Endothelial cell of umbilical vein (primary cell): ENCODE measurements at regions of chr2 and their contacts with region 1.

Region 1: GRCh38 chr2:86584151-86584913 is 21.1 kb upstream of the CHMP3 start:
- DNase-seq: peak; percentile 94
- H3K4me3 ChIP-seq: no peak overlapping the region
- H3K27ac ChIP-seq: peak overlapping the region; percentile 94
- H3K4me1 ChIP-seq: peaks cover 20% of the 10 kb centered on the region
- H3K27me3 ChIP-seq: no peaks in the 10 kb centered on the region
- CTCF ChIP-seq: no peak
- POLR2A ChIP-seq: peak; percentile 22

Region 2: GRCh38 chr2:86512034-86512433 is 72.3 kb before region 1 on chr2:
- CTCF ChIA-PET with region 1: no interaction called
- POLR2A ChIA-PET with region 1: no interaction called
- dilution Hi-C with region 1: no loop called
- intact Hi-C with region 1: no loop called
- DNase-seq: no peak
- H3K4me3 ChIP-seq: no peak overlapping the region
- H3K27ac ChIP-seq: no peak overlapping the region
- H3K4me1 ChIP-seq: no peaks in the 10 kb centered on the region
- H3K27me3 ChIP-seq: no peaks in the 10 kb centered on the region
- CTCF ChIP-seq: no peak
- POLR2A ChIP-seq: no peak

Region 3: DNA sequence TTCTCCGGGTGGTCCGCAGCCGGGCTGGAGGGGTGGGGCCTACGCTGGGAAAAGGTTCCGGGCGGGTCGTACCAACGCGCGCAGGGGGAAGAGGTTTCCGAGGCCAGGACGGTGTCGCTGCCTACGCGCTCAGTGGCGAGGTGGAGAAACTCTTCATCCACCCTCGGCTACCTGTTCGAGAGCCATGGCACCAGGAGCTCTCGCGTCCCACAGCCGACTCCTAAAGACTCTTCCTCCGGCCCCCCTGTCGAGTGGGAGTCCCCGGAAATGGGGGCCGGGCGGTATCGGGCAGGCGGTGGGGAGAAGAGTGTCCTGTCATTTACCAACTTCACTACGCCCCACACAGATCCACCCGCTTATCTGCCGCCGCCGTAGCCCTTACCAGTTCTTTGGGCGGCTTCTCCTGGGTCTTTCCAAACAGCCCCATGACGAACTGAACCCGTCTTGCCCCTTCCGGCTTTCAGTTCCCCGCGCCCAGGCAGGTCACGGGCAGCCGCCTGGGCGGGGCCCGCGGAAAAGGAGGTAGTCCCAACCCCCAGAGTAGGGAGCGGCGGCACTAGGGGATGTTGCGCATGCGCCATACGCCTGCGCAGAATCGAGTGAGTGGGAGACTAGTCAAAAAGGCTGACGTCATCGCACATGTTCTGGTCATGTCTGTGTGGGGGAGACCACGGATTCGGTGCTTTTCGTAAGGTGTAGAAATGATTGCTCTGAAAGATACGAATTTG is 21.2 kb before region 1 on chr2 and contains the start of gene CHMP3:
- CTCF ChIA-PET with region 1: no interaction called
- POLR2A ChIA-PET with region 1: interaction called, 4 read pairs
- dilution Hi-C with region 1: no loop called
- intact Hi-C with region 1: loop called (anchors 1 kb)
- DNase-seq: peak; percentile 98
- H3K4me3 ChIP-seq: peak within 1 kb of the TSS; percentile 76 to 96 (median 78)
- H3K27ac ChIP-seq: peak within 1 kb of the TSS; percentile 97
- H3K4me1 ChIP-seq: peaks cover 6% of the 10 kb centered on the region
- H3K27me3 ChIP-seq: no peaks in the 10 kb centered on the region
- CTCF ChIP-seq: no peak
- POLR2A ChIP-seq: peak; percentile 84
- total RNA-seq, gene CHMP3: 86.3 and 92.2 TPM in 2 replicates

Region 4: DNA sequence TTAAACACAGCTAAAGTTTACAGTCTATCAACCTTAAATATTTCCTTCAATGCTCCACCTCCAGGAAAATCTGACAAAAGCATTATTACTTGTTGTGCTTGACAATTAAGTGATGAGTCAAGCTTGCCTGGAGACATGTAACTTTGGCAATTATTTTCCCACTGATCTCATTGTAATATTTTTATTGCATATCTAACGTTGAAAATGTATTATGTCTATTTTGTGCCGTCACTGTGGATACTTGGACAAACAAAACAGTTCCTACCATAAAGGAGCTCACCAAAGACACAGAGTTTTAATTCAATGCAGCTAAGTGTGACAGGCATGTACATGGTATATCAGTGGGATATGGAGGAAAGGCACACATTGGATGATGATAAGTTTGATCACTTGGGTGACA is 14.6 kb after region 1 on chr2:
- CTCF ChIA-PET with region 1: no interaction called
- POLR2A ChIA-PET with region 1: no interaction called
- dilution Hi-C with region 1: no loop called
- intact Hi-C with region 1: no loop called
- DNase-seq: peak; percentile 13
- H3K4me3 ChIP-seq: no peak overlapping the region
- H3K27ac ChIP-seq: no peak overlapping the region
- H3K4me1 ChIP-seq: no peaks in the 10 kb centered on the region
- H3K27me3 ChIP-seq: no peaks in the 10 kb centered on the region
- CTCF ChIP-seq: no peak
- POLR2A ChIP-seq: no peak

Region 5: GRCh38 chr2:86649119-86649947 is 65.0 kb after region 1 on chr2:
- CTCF ChIA-PET with region 1: no interaction called
- POLR2A ChIA-PET with region 1: no interaction called
- dilution Hi-C with region 1: no loop called
- intact Hi-C with region 1: no loop called
- DNase-seq: no peak
- H3K4me3 ChIP-seq: no peak overlapping the region
- H3K27ac ChIP-seq: no peak overlapping the region
- H3K4me1 ChIP-seq: no peaks in the 10 kb centered on the region
- H3K27me3 ChIP-seq: no peaks in the 10 kb centered on the region
- CTCF ChIP-seq: no peak
- POLR2A ChIP-seq: no peak